IMR-90 (cell line): ENCODE measurements at regions of chr2 and their contacts with region 1.

Region 1: DNA sequence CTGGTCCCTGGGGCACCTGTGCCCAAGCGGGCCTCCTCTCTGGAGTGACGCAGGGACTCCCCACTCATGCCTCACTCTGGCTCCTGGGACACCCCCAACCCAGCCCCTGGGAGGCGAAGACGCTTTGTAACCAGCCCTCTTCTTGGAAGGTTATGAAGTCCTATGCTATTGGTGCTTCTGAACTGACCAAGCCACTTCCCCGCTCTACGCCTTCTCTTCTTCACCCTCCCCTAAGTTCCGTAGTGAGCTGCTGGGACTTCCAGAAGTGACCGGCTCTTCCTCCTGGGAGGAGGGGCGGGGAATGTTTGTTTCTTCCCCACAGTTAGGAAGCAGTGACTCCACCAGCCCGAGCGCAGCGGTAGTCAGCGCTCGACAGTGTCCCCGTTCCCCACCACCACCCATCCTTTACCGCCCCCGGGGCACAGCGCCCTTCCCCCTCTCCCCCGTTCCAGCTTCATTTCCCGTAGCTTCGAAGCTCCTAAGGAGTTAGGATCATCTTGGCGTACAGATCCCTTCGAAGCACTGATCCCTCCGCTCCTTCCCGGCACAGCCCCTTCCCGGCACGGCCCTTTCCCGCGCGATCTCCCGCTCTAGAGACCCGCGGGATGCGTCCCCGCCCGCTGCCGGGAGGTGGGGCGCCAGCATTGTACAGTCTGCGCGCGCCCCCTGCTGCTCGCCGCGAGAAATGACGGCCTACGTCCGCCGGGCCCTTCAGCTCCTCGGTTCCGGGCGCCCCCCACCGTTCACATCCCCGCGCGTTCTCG is 25.3 kb upstream of the NOTO start:
- DNase-seq: peak; percentile 76
- ATAC-seq: peak; percentile 98
- H3K4me3 ChIP-seq: peak overlapping the region; percentile 72
- H3K27ac ChIP-seq: peak overlapping the region; percentile 48; the same call in 1 of the 2 replicates
- H3K4me1 ChIP-seq: 0 out of 2 replicates have a peak, but pooled peaks cover 2% of the 10 kb centered on the region
- H3K27me3 ChIP-seq: peaks cover 48% of the 10 kb centered on the region
- CTCF ChIP-seq: peak; percentile 99
- POLR2A ChIP-seq: no peak
- RAD21 ChIP-seq: peak; percentile 92

Region 2: GRCh38 chr2:73187549-73187948 is 10.5 kb after region 1 on chr2:
- CTCF ChIA-PET with region 1: interaction called, 10 read pairs
- POLR2A ChIA-PET with region 1: no interaction called
- dilution Hi-C with region 1: no loop called
- in situ Hi-C with region 1: no loop called
- intact Hi-C with region 1: no loop called
- DNase-seq: no peak
- ATAC-seq: no peak
- H3K4me3 ChIP-seq: no peak overlapping the region
- H3K27ac ChIP-seq: no peak overlapping the region
- H3K4me1 ChIP-seq: no peaks in the 10 kb centered on the region
- H3K27me3 ChIP-seq: peaks cover 64% of the 10 kb centered on the region
- CTCF ChIP-seq: no peak
- POLR2A ChIP-seq: no peak
- RAD21 ChIP-seq: no peak

Region 3: GRCh38 chr2:73212448-73213176 is 35.5 kb after region 1 on chr2:
- CTCF ChIA-PET with region 1: interaction called, 11 read pairs
- POLR2A ChIA-PET with region 1: no interaction called
- dilution Hi-C with region 1: no loop called
- in situ Hi-C with region 1: no loop called
- intact Hi-C with region 1: loop called (anchors 1 kb)
- DNase-seq: peak; percentile 87
- ATAC-seq: peak; percentile 70
- H3K4me3 ChIP-seq: no peak overlapping the region
- H3K27ac ChIP-seq: no peak overlapping the region
- H3K4me1 ChIP-seq: peaks cover 6% of the 10 kb centered on the region; the same call in 1 of the 2 replicates
- H3K27me3 ChIP-seq: peaks cover 10% of the 10 kb centered on the region
- CTCF ChIP-seq: peak; percentile 83
- POLR2A ChIP-seq: no peak
- RAD21 ChIP-seq: peak; percentile 61

Region 4: DNA sequence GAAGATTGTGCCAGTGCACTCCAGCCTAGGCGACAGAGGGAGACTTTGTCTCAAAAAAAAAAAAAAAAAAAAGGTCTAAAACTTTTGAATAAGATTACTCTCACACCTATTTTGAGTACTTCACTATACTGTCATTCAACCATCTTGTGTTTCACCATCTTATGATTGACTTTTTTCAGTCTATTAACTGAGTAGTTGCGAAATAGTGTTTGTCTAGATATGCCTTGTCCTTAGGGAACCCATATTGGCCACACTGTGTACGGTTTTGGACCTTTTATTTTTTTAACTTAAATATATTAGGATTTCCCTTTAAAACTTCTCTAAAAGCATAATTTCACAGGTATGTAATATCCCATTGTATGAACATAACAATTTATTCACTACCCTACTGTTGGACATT is 280.9 kb after region 1 on chr2:
- CTCF ChIA-PET with region 1: no interaction called
- POLR2A ChIA-PET with region 1: no interaction called
- dilution Hi-C with region 1: no loop called
- in situ Hi-C with region 1: no loop called
- intact Hi-C with region 1: no loop called
- DNase-seq: no peak
- ATAC-seq: no peak
- H3K4me3 ChIP-seq: no peak overlapping the region
- H3K27ac ChIP-seq: no peak overlapping the region
- H3K4me1 ChIP-seq: no peaks in the 10 kb centered on the region
- H3K27me3 ChIP-seq: no peaks in the 10 kb centered on the region
- CTCF ChIP-seq: no peak
- POLR2A ChIP-seq: no peak
- RAD21 ChIP-seq: no peak